ENCODE measurements at regions of chr6 and their contacts with region 1.

Region 1: GRCh38 chr6:144215932-144216667 is 65.8 kb downstream of the STX11 start:
- DNase-seq: peak; percentile 80 to 99 (median 92)
- ATAC-seq: peak; percentile 85 to 87
- H3K4me3 Mint-ChIP-seq: peak overlapping the region; percentile 92 to 99 (median 97)
- H3K27ac Mint-ChIP-seq: peak overlapping the region; percentile 96 to 100 (median 98)
- H3K4me1 Mint-ChIP-seq: peaks cover 29 to 42% (median 37%) of the 10 kb centered on the region in 4 donors
- H3K27me3 Mint-ChIP-seq: peaks cover 0 to 7% (median 4%) of the 10 kb centered on the region in 5 donors

Region 2: DNA sequence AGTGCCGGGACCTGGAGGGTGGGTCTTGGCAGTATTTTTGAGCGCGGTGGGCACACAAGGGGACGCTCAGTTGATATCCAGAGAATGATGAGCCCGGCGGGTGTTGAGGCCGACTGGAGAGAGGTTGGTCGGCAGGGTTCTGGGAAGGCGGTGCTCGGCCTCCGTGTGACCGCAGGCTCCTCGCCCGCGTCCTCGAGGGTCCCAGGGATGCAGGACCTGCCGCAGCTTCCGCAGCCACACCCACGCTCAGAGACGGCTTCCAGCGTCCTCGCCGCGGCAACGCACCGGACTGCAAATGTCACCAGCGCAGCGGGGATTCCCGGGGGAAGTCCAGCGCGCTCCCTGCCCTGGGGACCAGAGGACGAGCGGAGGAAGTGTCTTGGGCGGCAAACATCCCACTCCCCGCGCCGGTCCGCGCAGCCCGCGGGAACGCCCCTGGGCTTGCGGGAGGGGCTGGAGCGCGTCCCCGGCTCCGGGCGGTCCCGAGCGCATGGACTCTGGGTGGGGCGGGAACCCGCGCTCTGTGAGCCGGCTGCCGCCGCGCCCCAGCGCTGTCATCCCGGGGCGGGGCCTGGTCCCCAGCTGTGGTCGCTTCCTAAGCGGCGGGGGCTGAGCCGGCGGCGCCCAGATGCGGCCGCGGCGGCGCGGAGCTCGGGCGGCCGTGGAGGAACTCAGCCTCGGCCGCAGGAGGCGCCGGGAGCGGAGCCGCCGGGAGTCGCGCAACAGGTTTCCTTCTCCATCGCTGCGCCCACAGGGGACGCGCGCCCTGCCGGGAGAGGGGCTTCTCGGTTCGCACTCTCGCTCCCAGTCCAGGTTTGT is 66.0 kb before region 1 on chr6 and contains the start of gene STX11:
- POLR2A ChIA-PET with region 1: interaction called, 11 read pairs
- DNase-seq: peak; percentile 24 to 67 (median 45)
- ATAC-seq: peak; percentile 70 to 78
- H3K4me3 Mint-ChIP-seq: peak within 1 kb of the TSS; percentile 85 to 99 (median 96)
- H3K27ac Mint-ChIP-seq: peak within 1 kb of the TSS; percentile 63 to 99 (median 95)
- H3K4me1 Mint-ChIP-seq: peaks cover 8 to 34% (median 14%) of the 10 kb centered on the region in 4 donors
- H3K27me3 Mint-ChIP-seq: no peaks in the 10 kb centered on the region
- polyA plus RNA-seq, gene STX11: 1.7 to 8.0 (median 2.5) TPM

Measured in naive thymus-derived CD8-positive, alpha-beta T cell (primary cell).